MCF 10A (cell line): ENCODE measurements at regions of chr1 and their contacts with region 1.

Region 1: DNA sequence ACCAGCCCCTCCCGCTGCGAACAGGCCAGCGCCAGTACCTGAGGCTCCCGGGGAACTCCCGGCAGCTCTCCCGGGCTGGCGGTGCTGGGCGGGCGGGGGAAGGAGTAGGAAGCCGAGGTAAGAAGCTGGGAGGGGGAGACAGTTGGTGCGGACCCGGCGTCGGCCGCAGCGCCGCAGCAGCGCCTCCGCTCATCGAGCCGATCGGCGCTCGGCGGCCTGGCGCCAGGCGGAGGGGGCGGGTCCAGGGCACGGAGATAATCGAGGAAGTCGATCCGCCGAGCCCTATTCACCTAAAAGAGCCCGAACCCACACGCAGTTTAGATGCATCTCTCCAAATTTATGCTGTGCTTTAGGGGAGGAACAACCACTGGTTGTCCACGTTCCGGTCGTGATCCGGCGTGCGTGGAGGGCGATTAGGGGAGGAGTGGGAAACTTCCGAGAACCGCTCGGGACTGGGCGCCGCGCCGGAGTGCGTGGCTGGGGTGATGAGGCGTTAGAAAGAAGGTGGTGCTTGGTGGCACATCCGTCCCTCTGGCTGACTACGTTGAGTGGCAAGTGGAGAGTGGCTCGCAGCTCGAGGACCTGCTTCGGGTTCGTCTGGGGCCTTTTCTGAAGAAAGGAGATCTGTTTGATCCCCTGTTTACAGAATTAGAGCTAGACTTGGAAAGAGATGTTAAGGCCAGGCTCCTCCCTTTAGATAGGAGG is at the start of gene VAMP4:
- DNase-seq: peak; percentile 89
- H3K4me3 Mint-ChIP-seq: peak within 1 kb of the TSS; percentile 87
- H3K27ac Mint-ChIP-seq: peak within 1 kb of the TSS; percentile 98
- H3K4me1 Mint-ChIP-seq: peaks cover 45% of the 10 kb centered on the region
- H3K27me3 Mint-ChIP-seq: no peaks in the 10 kb centered on the region
- CTCF ChIP-seq: no peak
- total RNA-seq, gene VAMP4: 20.2 and 21.1 TPM in 2 replicates

Region 2: GRCh38 chr1:171644805-171645483 is 97.1 kb before region 1 on chr1:
- CTCF ChIA-PET with region 1: interaction called, 23 read pairs
- POLR2A ChIA-PET with region 1: interaction called, 6 read pairs
- intact Hi-C with region 1: loop called (anchors 10 kb)
- DNase-seq: peak; percentile 94
- H3K4me3 Mint-ChIP-seq: no peak overlapping the region
- H3K27ac Mint-ChIP-seq: no peak overlapping the region
- H3K4me1 Mint-ChIP-seq: no peaks in the 10 kb centered on the region
- H3K27me3 Mint-ChIP-seq: no peaks in the 10 kb centered on the region
- CTCF ChIP-seq: peak; percentile 74

Region 3: DNA sequence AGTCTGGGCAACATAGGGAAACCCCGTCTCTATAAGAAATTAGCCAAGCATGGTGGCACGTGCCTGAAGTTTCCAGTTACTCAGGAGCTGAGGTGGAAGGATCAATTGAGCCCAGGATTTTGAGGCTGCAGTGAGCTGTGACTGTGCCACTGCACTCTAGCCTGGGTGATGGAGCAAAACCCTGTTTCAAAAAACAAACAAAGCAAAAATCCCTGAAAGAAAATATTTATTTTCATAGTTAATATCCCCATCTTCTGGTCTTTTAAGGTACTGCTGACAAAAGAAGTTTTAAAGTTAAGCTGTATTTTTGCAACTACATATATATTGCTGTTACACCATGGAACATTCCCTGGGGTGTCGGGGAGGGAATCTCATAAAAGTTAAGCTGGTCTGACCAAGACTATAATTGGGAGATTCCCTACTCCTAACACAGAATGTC is 26.2 kb before region 1 on chr1:
- CTCF ChIA-PET with region 1: interaction called, 63 read pairs
- POLR2A ChIA-PET with region 1: interaction called, 36 read pairs
- intact Hi-C with region 1: no loop called
- DNase-seq: peak; percentile 18
- H3K4me3 Mint-ChIP-seq: no peak overlapping the region
- H3K27ac Mint-ChIP-seq: no peak overlapping the region
- H3K4me1 Mint-ChIP-seq: peaks cover 6% of the 10 kb centered on the region
- H3K27me3 Mint-ChIP-seq: no peaks in the 10 kb centered on the region
- CTCF ChIP-seq: peak; percentile 44

Region 4: DNA sequence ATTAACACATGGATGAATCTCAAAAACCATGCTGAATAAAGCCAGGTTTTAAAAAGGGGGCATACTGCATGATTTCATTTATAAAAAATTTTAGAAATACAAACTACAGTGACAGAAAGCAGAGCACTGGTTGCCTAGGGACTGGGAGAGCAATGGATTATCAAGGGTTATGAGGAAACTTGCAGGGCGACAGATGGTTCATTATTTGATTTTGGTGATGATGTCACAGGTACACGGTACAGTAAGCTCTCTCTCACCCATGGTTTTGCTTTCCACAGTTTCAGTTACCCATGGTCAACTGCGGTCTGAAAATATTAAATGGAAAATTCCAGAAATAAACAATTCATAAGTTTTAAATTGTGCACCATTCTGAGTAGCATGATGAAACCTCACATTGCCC is 14.2 kb before region 1 on chr1:
- CTCF ChIA-PET with region 1: interaction called, 12 read pairs
- POLR2A ChIA-PET with region 1: interaction called, 27 read pairs
- intact Hi-C with region 1: no loop called
- DNase-seq: no peak
- H3K4me3 Mint-ChIP-seq: no peak overlapping the region
- H3K27ac Mint-ChIP-seq: no peak overlapping the region
- H3K4me1 Mint-ChIP-seq: peaks cover 10% of the 10 kb centered on the region
- H3K27me3 Mint-ChIP-seq: no peaks in the 10 kb centered on the region
- CTCF ChIP-seq: no peak

Region 5: DNA sequence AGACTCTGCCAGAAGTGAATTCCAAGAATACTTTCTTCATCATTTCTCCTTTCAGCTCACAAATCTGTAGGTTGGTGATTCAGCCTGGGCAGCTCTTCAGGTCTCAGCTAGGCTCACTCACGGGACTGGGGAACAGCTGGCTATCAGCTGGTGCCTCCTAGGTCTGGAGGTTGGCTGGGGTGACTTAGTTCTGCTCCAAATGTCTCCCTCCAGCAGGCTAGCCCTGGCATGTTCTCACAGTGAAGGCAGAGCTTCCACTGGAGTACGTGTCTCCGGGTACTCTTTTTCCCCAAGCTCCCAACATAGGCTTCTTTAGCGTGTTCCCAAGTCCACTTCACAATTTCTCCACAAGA is 12.3 kb after region 1 on chr1:
- CTCF ChIA-PET with region 1: interaction called, 5 read pairs
- POLR2A ChIA-PET with region 1: interaction called, 87 read pairs
- intact Hi-C with region 1: no loop called
- DNase-seq: peak; percentile 7
- H3K4me3 Mint-ChIP-seq: no peak overlapping the region
- H3K27ac Mint-ChIP-seq: peak overlapping the region; percentile 80
- H3K4me1 Mint-ChIP-seq: peaks cover 10% of the 10 kb centered on the region
- H3K27me3 Mint-ChIP-seq: no peaks in the 10 kb centered on the region
- CTCF ChIP-seq: no peak

Region 6: GRCh38 chr1:171769171-171769570 is 27.1 kb after region 1 on chr1:
- CTCF ChIA-PET with region 1: interaction called, 16 read pairs
- POLR2A ChIA-PET with region 1: interaction called, 16 read pairs
- intact Hi-C with region 1: no loop called
- DNase-seq: no peak
- H3K4me3 Mint-ChIP-seq: no peak overlapping the region
- H3K27ac Mint-ChIP-seq: no peak overlapping the region
- H3K4me1 Mint-ChIP-seq: no peaks in the 10 kb centered on the region
- H3K27me3 Mint-ChIP-seq: peaks cover 17% of the 10 kb centered on the region
- CTCF ChIP-seq: no peak

Region 7: GRCh38 chr1:171781176-171781875 is 39.3 kb after region 1 on chr1 and contains the start of gene METTL13:
- CTCF ChIA-PET with region 1: interaction called, 8 read pairs
- POLR2A ChIA-PET with region 1: interaction called, 307 read pairs
- intact Hi-C with region 1: loop called (anchors 1 kb)
- DNase-seq: peak; percentile 100
- H3K4me3 Mint-ChIP-seq: peak within 1 kb of the TSS; percentile 84
- H3K27ac Mint-ChIP-seq: peak within 1 kb of the TSS; percentile 95
- H3K4me1 Mint-ChIP-seq: peaks cover 28% of the 10 kb centered on the region
- H3K27me3 Mint-ChIP-seq: no peaks in the 10 kb centered on the region
- CTCF ChIP-seq: no peak
- total RNA-seq, gene METTL13: 30.7 and 39.1 TPM in 2 replicates